Calu3 (cell line): ENCODE measurements at regions of chrX and their contacts with region 1.

Region 1: DNA sequence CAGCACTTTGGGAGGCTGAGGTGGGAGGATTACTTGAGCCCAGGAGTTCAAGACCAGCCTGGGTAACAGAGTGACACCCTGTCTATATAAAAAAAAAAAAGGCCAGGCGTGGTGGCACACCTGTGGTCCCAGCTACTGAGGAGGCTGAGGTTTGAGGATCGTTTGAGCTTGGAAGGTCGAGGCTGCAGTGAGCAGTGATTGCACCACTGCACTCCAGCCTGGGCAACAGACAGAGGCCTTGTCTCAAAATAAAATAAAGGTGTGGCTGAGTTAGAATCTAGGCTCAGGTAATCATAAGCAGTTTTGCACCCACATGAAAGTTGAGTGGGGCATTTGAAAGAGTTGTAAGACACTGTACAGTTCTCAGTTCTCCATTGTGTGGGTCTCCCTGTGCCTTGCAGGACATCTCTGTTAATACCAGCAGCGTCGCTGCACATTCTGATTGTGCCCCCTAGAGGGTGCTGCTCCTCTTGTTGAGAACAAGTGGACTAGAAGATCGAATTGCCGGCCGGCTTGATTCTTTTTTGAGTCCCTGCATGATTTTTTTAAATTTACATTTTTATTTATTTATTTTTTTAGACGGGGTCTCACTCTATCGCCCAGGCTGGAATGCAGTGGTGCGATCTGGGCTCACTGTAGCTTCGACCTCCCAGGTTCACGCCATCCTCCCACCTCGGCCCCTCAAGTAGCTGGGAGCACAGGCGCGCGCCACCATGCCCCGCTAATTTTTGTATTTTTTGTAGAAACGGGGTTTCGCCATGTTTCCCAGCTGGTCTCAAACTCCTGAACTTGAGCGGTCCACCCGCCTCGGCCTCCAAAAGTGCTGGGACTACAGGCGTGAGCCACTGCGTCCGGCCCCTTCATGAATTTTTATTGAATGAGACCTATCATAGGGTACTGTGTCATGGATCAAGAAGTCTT is 73.6 kb upstream of the RBMX start:
- DNase-seq: peak; percentile 65
- H3K4me3 Mint-ChIP-seq: no peak overlapping the region
- H3K27ac Mint-ChIP-seq: no peak overlapping the region
- H3K4me1 Mint-ChIP-seq: no peaks in the 10 kb centered on the region
- H3K27me3 Mint-ChIP-seq: no peaks in the 10 kb centered on the region
- CTCF ChIP-seq: peak; percentile 43

Region 2: DNA sequence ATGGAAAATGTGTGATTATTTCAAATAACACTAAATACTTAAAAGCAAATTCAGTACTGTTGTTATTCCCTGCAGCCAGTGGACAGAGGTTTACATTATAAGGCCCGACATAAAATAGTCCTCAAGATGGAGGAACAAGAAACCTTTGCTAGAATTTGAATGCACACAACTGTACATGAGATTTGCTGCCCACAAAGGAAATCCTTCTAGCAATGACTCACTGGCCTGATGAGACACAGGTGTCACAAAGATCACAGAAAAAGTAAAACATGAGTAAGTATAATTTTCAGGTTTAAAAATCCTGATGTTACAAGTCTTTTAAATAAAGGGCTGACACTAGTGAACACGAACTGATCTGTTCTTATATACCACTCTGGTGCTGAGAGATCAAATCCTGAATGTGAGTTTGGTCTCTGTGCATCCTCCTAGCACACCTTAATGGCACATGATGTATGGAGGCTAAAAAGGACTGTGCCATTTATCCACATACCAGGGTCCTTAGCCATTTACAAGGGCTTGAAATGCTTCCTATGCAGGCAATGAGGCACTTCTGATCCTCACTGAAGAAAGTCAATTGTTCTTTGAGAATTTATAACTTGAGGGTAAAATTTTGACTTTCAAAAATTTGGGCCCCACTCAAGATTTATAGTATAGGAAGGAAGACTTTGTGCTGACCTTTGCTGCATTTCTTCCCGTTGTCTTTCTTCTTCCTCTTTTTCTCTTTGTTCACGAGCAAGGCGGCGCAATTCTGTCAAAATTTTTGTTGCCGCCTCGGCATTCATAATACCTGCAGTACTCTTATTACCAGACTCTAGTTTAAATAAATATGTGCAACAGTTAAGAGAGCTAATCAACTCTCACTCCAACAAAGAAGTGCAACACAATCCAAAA is 725.9 kb before region 1 on chrX:
- CTCF ChIA-PET with region 1: no interaction called
- intact Hi-C with region 1: no loop called
- DNase-seq: no peak
- H3K4me3 Mint-ChIP-seq: no peak overlapping the region
- H3K27ac Mint-ChIP-seq: no peak overlapping the region
- H3K4me1 Mint-ChIP-seq: no peaks in the 10 kb centered on the region
- H3K27me3 Mint-ChIP-seq: no peaks in the 10 kb centered on the region
- CTCF ChIP-seq: no peak

Region 3: GRCh38 chrX:136767104-136767941 is 186.8 kb before region 1 on chrX:
- CTCF ChIA-PET with region 1: no interaction called
- intact Hi-C with region 1: no loop called
- DNase-seq: peak; percentile 57
- H3K4me3 Mint-ChIP-seq: peak overlapping the region; percentile 72
- H3K27ac Mint-ChIP-seq: no peak overlapping the region
- H3K4me1 Mint-ChIP-seq: no peaks in the 10 kb centered on the region
- H3K27me3 Mint-ChIP-seq: peaks cover 19% of the 10 kb centered on the region
- CTCF ChIP-seq: peak; percentile 19

Region 4: DNA sequence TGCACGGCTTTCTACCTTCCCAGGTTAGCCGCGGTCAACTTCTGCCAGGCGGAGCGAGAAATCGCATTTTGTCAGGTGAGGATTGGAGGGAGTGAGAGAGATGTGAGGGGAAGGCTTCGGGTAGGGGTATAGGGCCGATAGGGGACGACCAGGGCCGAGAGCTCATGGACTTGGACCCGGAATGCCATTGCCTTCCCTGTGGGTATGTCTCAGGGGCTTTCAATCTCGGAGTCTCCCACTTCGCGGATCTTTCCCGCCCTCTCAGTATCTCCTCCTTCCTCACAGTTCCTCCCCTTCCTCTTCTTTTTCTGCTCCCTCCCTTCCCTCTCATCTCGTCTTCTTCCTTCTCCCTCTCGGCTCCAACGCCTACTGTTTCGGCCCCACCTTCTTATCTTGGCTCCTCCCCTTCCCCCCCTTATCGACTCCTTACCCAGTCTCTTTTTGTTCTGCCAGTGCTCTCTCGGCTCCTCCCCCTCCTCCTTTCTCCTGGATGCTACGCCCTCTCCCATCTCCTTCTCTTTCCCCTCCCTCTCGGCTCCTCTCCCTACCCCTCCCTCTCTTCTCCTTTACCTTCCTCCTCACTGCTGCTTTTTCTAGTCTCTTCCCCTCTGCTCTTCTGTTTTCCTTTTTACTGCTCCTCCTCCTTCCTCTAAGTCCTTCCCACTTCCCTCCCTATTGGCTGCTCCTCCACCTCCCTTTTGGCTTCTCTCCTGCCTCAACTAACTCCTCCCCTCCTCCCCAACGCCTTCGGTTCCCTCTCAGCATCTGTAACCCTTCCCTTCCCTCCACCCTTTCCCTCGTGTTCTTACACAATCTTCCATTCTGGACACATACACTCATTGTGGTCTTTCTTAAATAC is 44.2 kb before region 1 on chrX:
- CTCF ChIA-PET with region 1: no interaction called
- intact Hi-C with region 1: no loop called
- DNase-seq: peak; percentile 79
- H3K4me3 Mint-ChIP-seq: peak overlapping the region; percentile 95
- H3K27ac Mint-ChIP-seq: peak overlapping the region; percentile 87
- H3K4me1 Mint-ChIP-seq: peaks cover 17% of the 10 kb centered on the region
- H3K27me3 Mint-ChIP-seq: no peaks in the 10 kb centered on the region
- CTCF ChIP-seq: no peak

Region 5: GRCh38 chrX:137051978-137052642 is 98.0 kb after region 1 on chrX:
- CTCF ChIA-PET with region 1: no interaction called
- intact Hi-C with region 1: loop called (anchors 1 kb)
- DNase-seq: peak; percentile 73
- H3K4me3 Mint-ChIP-seq: peak overlapping the region; percentile 66
- H3K27ac Mint-ChIP-seq: no peak overlapping the region
- H3K4me1 Mint-ChIP-seq: no peaks in the 10 kb centered on the region
- H3K27me3 Mint-ChIP-seq: peaks cover 75% of the 10 kb centered on the region
- CTCF ChIP-seq: peak; percentile 80

Region 6: GRCh38 chrX:137194164-137194563 is 240.0 kb after region 1 on chrX:
- CTCF ChIA-PET with region 1: no interaction called
- intact Hi-C with region 1: loop called (anchors 10 kb)
- DNase-seq: peak; percentile 6
- H3K4me3 Mint-ChIP-seq: no peak overlapping the region
- H3K27ac Mint-ChIP-seq: no peak overlapping the region
- H3K4me1 Mint-ChIP-seq: no peaks in the 10 kb centered on the region
- H3K27me3 Mint-ChIP-seq: no peaks in the 10 kb centered on the region
- CTCF ChIP-seq: no peak